Panc1 (cell line): ENCODE measurements at regions of chr1 and their contacts with region 1.

Region 1: DNA sequence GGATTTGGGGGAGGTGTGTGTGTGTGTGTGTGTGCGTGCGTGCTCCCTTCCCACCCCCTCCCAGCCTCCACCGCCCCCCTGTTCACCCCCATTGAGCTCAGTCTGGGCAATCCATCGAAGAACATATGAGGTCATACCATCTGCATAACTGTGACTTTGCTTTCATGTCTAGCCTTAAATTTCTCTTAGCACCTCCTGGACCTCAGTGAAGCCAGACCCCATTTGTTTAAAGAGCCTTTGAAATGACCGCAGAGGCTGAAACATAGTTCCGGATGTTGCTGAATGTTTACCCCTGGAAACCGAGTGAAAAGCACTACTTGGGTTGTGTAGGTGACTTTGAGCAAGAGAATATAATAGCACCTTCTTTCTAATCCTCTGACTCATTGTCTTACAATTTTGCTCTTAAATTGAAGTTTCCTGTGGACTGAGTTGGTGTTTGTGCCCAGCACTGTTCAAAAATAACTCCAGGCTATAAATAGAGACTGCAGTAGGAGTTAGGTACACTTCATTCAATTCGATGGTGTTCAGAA is 75.4 kb downstream of the UBE4B start:
- DNase-seq: peak; percentile 42
- ATAC-seq: peak; percentile 86
- H3K4me3 ChIP-seq: no peak overlapping the region
- H3K27ac ChIP-seq: peak overlapping the region; percentile 31; the same call in 1 of the 2 replicates
- H3K4me1 ChIP-seq: peaks cover 7% of the 10 kb centered on the region; the same call in 1 of the 2 replicates
- H3K27me3 ChIP-seq: no peaks in the 10 kb centered on the region
- CTCF ChIP-seq: no peak

Region 2: GRCh38 chr1:10057343-10057742 is 50.9 kb before region 1 on chr1:
- CTCF ChIA-PET with region 1: no interaction called
- POLR2A ChIA-PET with region 1: no interaction called
- in situ Hi-C with region 1: no loop called
- intact Hi-C with region 1: no loop called
- DNase-seq: no peak
- ATAC-seq: no peak
- H3K4me3 ChIP-seq: no peak overlapping the region
- H3K27ac ChIP-seq: no peak overlapping the region
- H3K4me1 ChIP-seq: peaks cover 6% of the 10 kb centered on the region; the same call in 1 of the 2 replicates
- H3K27me3 ChIP-seq: no peaks in the 10 kb centered on the region
- CTCF ChIP-seq: no peak

Region 3: DNA sequence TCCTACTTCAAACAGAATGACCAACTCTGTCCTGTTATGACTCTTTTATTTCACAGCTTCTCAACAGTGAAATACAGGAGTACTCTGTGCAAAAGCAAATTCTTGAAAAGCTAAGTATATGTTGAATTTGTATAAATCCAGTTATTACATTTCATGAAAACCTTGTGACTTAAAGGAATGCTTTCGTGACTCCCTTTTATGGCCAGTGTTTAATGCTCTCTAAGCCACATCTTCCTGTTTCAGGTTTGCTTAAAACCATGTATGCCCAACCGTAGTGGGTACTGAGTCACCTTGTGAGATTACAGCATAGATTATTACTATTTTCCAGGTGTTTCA is 62.0 kb after region 1 on chr1:
- CTCF ChIA-PET with region 1: no interaction called
- POLR2A ChIA-PET with region 1: no interaction called
- in situ Hi-C with region 1: no loop called
- intact Hi-C with region 1: no loop called
- DNase-seq: no peak
- ATAC-seq: no peak
- H3K4me3 ChIP-seq: no peak overlapping the region
- H3K27ac ChIP-seq: no peak overlapping the region
- H3K4me1 ChIP-seq: no peaks in the 10 kb centered on the region
- H3K27me3 ChIP-seq: no peaks in the 10 kb centered on the region
- CTCF ChIP-seq: no peak

Region 4: DNA sequence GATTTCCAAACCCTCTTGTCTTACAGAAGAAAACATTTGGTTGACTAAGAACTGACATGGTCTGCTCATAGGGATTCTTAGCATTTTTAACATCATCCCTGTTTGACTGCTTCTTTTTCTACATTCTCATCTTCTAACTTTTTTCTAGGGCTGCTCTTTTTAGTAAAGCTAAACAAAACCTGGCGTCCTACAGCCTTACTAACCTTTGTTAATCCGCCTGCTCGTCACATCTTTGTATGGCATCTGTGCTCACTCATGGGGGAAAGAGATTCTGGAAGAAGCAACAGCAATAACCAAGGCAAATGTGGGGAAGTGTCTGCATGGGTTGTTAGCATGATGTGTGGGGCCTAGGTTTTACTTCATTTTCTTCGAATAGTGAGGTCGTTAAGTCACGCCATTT is 194.2 kb after region 1 on chr1:
- CTCF ChIA-PET with region 1: no interaction called
- POLR2A ChIA-PET with region 1: interaction called, 22 read pairs
- in situ Hi-C with region 1: no loop called
- intact Hi-C with region 1: no loop called
- DNase-seq: no peak
- ATAC-seq: no peak
- H3K4me3 ChIP-seq: no peak overlapping the region
- H3K27ac ChIP-seq: no peak overlapping the region
- H3K4me1 ChIP-seq: no peaks in the 10 kb centered on the region
- H3K27me3 ChIP-seq: no peaks in the 10 kb centered on the region
- CTCF ChIP-seq: no peak